Activated B cell treated with CpG ODN at 0.5 μM for 24 hours (primary cell): ENCODE measurements at regions of chr10 and their contacts with region 1.

Region 1: GRCh38 chr10:99732033-99732912 is at the starts of genes COX15 and CUTC:
- DNase-seq: peak; percentile 91
- ATAC-seq: peak; percentile 88
- H3K4me3 Mint-ChIP-seq: peak within 1 kb of the TSS; percentile 100
- H3K27ac Mint-ChIP-seq: peak within 1 kb of the TSS; percentile 99
- H3K4me1 Mint-ChIP-seq: peaks cover 31% of the 10 kb centered on the region
- H3K27me3 Mint-ChIP-seq: no peaks in the 10 kb centered on the region
- CTCF ChIP-seq: no peak
- total RNA-seq, gene COX15: 39.8 and 44.5 TPM in 2 replicates
- total RNA-seq, gene CUTC: 25.4 and 27.5 TPM in 2 replicates

Region 2: DNA sequence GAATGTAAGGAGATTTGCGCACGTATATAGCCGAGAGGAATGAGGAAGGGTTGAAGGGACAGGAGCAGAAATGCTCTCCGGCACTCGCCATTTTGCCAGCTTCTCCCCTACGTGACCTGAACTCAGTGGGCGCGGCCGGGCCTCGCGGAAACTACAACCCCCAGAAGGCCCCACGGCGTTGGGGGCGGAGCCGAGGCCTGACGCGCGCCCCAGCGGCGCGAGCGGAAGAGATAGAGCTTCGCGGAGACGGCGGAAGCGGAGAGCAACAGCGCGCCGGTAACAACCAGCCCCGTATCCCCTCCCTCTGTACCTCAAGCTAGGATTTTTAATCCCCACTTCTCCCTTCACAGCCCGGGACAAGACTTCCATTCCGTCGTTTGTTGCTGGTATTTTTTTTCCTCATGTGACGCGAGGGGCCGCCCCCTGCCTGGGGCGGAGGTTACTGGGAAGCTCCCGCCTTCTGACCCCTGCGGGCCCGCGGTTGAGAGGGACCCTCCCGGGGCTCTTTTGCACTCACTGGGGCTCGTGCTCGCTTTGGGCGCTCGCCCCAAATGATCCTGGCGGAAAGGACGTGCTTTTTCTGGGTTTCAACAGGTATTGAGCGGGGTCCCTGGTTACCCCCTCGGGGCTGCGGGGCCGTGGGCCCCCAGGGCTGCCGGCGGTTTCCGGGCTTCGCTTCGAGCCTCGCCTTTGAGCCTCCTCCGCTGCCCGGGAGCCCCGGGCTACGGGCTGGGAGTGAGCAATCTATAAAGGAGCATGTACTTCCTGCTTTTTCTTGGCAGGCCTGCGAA is 1597.6 kb before region 1 on chr10 and contains the start of gene R3HCC1L:
- CTCF ChIA-PET with region 1: no interaction called
- POLR2A ChIA-PET with region 1: interaction called, 4 read pairs
- intact Hi-C with region 1: loop called (anchors 5 kb)
- DNase-seq: peak; percentile 93
- ATAC-seq: peak; percentile 91
- H3K4me3 Mint-ChIP-seq: peak within 1 kb of the TSS; percentile 94
- H3K27ac Mint-ChIP-seq: peak within 1 kb of the TSS; percentile 97
- H3K4me1 Mint-ChIP-seq: peaks cover 63% of the 10 kb centered on the region
- H3K27me3 Mint-ChIP-seq: no peaks in the 10 kb centered on the region
- CTCF ChIP-seq: no peak
- total RNA-seq, gene R3HCC1L: 24.4 and 24.9 TPM in 2 replicates

Region 3: DNA sequence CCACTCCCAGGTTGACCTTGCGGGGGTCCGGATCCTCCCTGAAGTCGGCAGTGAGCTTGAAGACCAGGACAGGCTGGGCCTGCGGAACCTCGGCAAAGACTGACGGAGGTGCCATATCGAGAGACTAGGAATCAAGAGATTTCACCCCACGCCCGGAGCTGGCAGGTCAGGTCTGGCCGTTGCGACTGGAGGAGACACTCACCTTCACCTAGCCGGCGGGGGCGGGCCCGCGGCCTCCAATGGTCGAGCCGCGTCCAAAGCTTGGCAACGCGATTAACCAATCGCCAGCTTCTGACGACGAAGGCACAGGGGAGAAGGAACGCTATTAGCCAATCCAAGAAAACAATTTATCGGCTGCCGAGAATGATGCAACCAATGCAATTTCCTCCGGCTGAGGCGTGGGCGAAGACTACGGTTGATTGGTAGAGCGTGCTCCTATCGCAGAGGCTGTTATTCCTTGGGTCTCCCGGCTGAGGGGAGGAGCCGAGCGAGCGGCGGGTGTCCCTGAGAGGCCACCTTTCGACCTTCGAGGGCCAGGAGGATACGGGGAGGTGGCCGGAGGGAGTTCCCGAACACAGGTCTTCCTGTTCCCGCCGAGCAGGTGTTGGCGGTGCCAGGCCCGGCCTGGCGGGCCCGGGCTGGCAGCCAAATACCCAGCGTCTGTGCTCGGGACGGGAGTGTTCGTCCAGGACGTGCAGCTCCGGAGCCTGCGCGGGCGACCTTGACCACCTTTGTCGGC is 301.7 kb before region 1 on chr10 and contains the start of gene GOT1:
- CTCF ChIA-PET with region 1: interaction called, 6 read pairs
- POLR2A ChIA-PET with region 1: interaction called, 8 read pairs
- intact Hi-C with region 1: loop called (anchors 2 kb)
- DNase-seq: peak; percentile 85
- ATAC-seq: peak; percentile 91
- H3K4me3 Mint-ChIP-seq: peak within 1 kb of the TSS; percentile 98
- H3K27ac Mint-ChIP-seq: peak within 1 kb of the TSS; percentile 92
- H3K4me1 Mint-ChIP-seq: peaks cover 29% of the 10 kb centered on the region
- H3K27me3 Mint-ChIP-seq: no peaks in the 10 kb centered on the region
- CTCF ChIP-seq: no peak
- total RNA-seq, gene GOT1: 30.1 and 31.4 TPM in 2 replicates

Region 4: DNA sequence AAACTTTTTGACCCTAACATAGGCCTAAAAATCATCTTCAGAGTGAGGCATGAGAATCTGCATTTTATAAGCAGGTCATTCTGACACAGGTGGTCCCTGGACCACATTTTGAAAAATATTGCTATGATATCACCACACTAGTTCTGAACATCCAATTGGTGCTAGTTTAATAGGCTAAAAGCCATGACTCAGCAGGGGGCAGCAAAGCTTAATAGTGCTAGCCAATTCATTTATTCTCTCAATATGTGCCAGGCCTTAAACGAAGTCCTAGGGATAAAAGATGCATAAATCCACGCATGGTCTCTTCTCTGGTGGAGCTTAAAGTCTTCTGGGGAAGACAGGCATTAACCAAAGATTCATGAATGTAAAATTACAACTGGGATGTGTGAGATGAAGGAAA is 101.8 kb before region 1 on chr10:
- CTCF ChIA-PET with region 1: no interaction called
- POLR2A ChIA-PET with region 1: no interaction called
- intact Hi-C with region 1: no loop called
- DNase-seq: no peak
- ATAC-seq: no peak
- H3K4me3 Mint-ChIP-seq: no peak overlapping the region
- H3K27ac Mint-ChIP-seq: no peak overlapping the region
- H3K4me1 Mint-ChIP-seq: no peaks in the 10 kb centered on the region
- H3K27me3 Mint-ChIP-seq: peaks cover 25% of the 10 kb centered on the region
- CTCF ChIP-seq: no peak

Region 5: DNA sequence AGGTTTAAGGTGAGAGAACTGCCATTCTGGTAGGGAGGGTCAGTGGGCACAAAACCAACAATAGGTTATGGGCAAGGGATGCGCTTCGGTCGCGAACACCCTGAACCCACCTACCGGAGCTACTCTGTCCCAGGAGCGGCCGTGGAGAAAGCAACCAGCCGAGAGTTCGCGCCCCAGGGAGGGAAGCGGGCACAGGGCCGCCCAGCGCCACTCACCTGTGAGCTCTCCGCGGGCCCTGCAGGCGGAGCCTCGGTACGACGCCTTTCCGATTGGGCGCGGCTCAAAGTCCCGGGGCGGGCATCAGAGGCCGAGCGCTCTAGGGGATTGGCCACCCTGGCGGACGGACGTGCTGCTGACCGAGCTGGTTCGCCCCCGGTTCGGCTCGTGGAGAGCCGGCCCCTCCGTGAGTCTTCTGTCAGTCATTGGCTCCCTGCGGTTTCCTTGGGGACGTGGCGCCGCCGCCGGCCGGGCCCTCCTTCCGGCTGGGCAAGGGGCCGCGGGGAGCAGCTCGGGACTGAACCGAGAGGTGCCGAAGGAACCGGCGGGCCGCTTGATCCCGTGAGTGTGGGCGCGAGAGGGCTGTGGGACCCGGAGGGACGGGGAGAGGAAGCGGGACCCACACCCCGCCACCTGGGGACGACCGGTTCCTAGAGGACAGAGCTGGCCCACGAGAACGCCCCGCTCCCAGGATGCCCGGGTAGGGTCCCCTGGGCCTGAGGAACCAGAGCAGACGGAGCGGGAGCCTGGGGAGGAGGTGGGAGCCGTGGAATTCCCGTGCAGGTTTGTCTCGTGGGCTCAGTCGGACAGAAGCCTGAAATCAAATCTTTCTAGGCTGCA is 73.0 kb before region 1 on chr10 and contains the start of gene ENTPD7:
- CTCF ChIA-PET with region 1: no interaction called
- POLR2A ChIA-PET with region 1: interaction called, 7 read pairs
- intact Hi-C with region 1: loop called (anchors 1 kb)
- DNase-seq: peak; percentile 82
- ATAC-seq: peak; percentile 99
- H3K4me3 Mint-ChIP-seq: peak within 1 kb of the TSS; percentile 85
- H3K27ac Mint-ChIP-seq: peak within 1 kb of the TSS; percentile 70
- H3K4me1 Mint-ChIP-seq: peaks cover 19% of the 10 kb centered on the region
- H3K27me3 Mint-ChIP-seq: peaks cover 5% of the 10 kb centered on the region
- CTCF ChIP-seq: no peak
- total RNA-seq, gene ENTPD7: 5.2 and 6.2 TPM in 2 replicates

Region 6: GRCh38 chr10:100009793-100010676 is 277.8 kb after region 1 on chr10 and contains the start of gene DNMBP:
- CTCF ChIA-PET with region 1: interaction called, 3 read pairs
- POLR2A ChIA-PET with region 1: interaction called, 3 read pairs
- intact Hi-C with region 1: loop called (anchors 2 kb)
- DNase-seq: peak; percentile 88
- ATAC-seq: peak; percentile 88
- H3K4me3 Mint-ChIP-seq: peak within 1 kb of the TSS; percentile 91
- H3K27ac Mint-ChIP-seq: peak within 1 kb of the TSS; percentile 89
- H3K4me1 Mint-ChIP-seq: peaks cover 75% of the 10 kb centered on the region
- H3K27me3 Mint-ChIP-seq: no peaks in the 10 kb centered on the region
- CTCF ChIP-seq: no peak
- total RNA-seq, gene DNMBP: 12.5 and 13.1 TPM in 2 replicates

Region 7: GRCh38 chr10:100912605-100913469 is 1180.6 kb after region 1 on chr10 and contains the start of gene SLF2:
- CTCF ChIA-PET with region 1: no interaction called
- POLR2A ChIA-PET with region 1: no interaction called
- intact Hi-C with region 1: loop called (anchors 2 kb)
- DNase-seq: peak; percentile 82
- ATAC-seq: peak; percentile 97
- H3K4me3 Mint-ChIP-seq: peak within 1 kb of the TSS; percentile 99
- H3K27ac Mint-ChIP-seq: peak within 1 kb of the TSS; percentile 96
- H3K4me1 Mint-ChIP-seq: peaks cover 33% of the 10 kb centered on the region
- H3K27me3 Mint-ChIP-seq: no peaks in the 10 kb centered on the region
- CTCF ChIP-seq: no peak
- total RNA-seq, gene SLF2: 29.9 and 35.5 TPM in 2 replicates